Lower leg skin (tissue), 4 donors: ENCODE measurements at regions of chr5 and their contacts with region 1.

Region 1: DNA sequence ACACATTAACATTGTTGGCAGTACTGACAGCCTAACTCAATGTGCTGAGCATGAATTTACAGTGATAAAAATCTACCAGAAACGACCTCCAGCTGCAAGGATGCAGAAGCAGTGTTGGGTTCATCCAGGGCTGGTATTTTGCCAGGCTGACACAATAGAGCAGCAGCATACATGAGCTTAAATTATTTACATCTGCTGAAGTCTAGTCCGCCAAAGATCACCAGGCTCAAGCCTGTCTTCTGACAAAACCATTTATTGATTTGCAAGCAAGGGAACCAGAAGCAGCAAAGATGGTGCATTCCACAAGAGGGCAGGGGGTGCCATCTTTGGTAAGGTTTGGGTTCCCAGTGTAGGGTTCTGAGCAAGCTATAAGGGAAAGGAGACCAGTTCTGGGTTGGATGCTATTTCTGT is 8.7 kb upstream of the C5orf34 start:
- DNase-seq: no peak
- H3K4me3 ChIP-seq: no peak overlapping the region
- CTCF ChIP-seq: no peak
- POLR2A ChIP-seq: no peak

Region 2: DNA sequence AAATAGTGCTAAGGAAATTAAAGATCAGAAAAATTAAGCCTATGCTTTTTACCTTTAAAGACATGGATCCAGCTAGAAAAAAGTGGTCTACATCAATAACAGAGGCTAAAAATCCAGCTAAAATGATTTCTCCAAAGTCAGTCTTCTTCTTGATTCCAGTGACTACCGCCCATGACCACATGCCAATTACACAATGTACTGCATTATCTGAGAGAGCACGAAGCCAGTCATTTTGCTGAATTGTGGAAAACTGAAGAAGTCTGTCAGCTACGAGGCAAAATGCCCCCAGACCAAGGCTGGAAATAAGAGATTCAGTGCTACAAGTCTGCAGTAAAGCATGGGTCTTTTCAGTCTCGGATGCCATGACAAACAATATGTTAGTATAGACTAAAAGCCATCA is 70.1 kb before region 1 on chr5:
- intact Hi-C with region 1: loop called (anchors 2 kb)
- DNase-seq: no peak
- H3K4me3 ChIP-seq: no peak overlapping the region
- CTCF ChIP-seq: no peak
- POLR2A ChIP-seq: no peak